ENCODE measurements at regions of chr5 and their contacts with region 1.

Region 1: DNA sequence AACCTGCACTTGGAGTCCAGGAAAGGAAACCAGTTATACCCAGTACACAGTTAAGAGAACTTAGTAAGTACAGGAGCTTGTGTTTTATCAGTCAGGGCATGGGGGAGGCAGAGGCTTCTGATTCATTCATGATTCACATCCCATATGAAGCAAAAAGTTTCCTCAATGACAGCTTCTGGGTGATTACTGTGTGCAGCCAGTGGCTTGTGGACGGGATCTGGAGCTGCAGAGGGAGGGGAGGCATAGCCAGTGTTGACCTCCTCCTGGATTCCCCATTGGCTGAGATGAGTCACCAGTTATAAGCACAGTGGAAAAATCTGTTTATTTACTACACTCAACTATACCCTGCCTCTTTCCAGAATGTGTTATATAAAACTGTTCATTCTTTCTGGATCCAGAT is 17.7 kb downstream of the IL31RA start:
- DNase-seq: no peak
- H3K4me3 Mint-ChIP-seq: no peak overlapping the region
- H3K27ac Mint-ChIP-seq: peak overlapping the region; percentile 78
- H3K4me1 Mint-ChIP-seq: peaks cover 14% of the 10 kb centered on the region
- H3K27me3 Mint-ChIP-seq: no peaks in the 10 kb centered on the region

Region 2: DNA sequence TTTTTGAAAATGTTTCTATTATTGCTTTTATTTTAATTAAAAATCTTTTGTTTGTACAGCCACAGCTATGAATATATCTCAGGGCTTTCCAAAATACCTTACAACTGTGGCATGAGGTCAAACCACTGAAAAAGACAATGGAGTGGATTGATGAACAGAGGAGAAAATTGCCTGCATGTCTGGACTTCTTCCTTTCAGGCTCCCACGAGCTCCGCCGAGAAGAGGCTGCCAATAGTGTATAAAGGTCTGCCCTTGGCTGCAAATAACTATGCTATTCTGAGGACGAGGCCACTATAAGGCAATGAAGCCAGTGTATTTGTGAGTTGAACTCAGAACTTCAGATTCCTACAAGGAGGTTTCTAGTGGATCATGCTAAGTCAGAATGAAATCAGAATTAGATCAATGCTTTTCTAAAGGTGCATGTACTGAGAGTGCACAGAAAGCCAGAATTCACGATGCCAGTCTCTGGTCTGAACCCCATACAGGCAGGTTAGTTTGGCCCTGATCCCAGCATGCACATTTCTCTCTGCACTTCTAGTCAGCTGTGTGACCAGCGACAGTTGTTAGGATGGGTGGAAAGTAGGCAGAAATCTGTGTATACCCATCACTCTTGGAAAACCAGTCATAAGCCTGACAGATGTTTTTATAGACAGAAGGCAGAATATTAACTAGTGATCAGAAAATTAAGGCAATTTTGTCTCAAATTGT is 291.3 kb before region 1 on chr5:
- intact Hi-C with region 1: loop called (anchors 5 kb)
- DNase-seq: no peak
- H3K4me3 Mint-ChIP-seq: no peak overlapping the region
- H3K27ac Mint-ChIP-seq: peak overlapping the region; percentile 21
- H3K4me1 Mint-ChIP-seq: peaks cover 33% of the 10 kb centered on the region
- H3K27me3 Mint-ChIP-seq: no peaks in the 10 kb centered on the region

Region 3: GRCh38 chr5:55711968-55712859 is 156.6 kb before region 1 on chr5 and contains the start of gene SLC38A9:
- intact Hi-C with region 1: loop called (anchors 1 kb)
- DNase-seq: peak; percentile 89
- H3K4me3 Mint-ChIP-seq: peak within 1 kb of the TSS; percentile 99
- H3K27ac Mint-ChIP-seq: peak within 1 kb of the TSS; percentile 91
- H3K4me1 Mint-ChIP-seq: peaks cover 39% of the 10 kb centered on the region
- H3K27me3 Mint-ChIP-seq: no peaks in the 10 kb centered on the region
- total RNA-seq, gene SLC38A9: 22.9 and 25.7 TPM in 2 replicates

Region 4: GRCh38 chr5:55747778-55748318 is 121.0 kb before region 1 on chr5:
- intact Hi-C with region 1: no loop called
- DNase-seq: no peak
- H3K4me3 Mint-ChIP-seq: no peak overlapping the region
- H3K27ac Mint-ChIP-seq: no peak overlapping the region
- H3K4me1 Mint-ChIP-seq: peaks cover 12% of the 10 kb centered on the region
- H3K27me3 Mint-ChIP-seq: peaks cover 2% of the 10 kb centered on the region

Region 5: GRCh38 chr5:55758231-55758630 is 110.6 kb before region 1 on chr5:
- intact Hi-C with region 1: loop called (anchors 2 kb)
- DNase-seq: no peak
- H3K4me3 Mint-ChIP-seq: peak overlapping the region; percentile 9
- H3K27ac Mint-ChIP-seq: no peak overlapping the region
- H3K4me1 Mint-ChIP-seq: peaks cover 25% of the 10 kb centered on the region
- H3K27me3 Mint-ChIP-seq: peaks cover 3% of the 10 kb centered on the region

Region 6: GRCh38 chr5:55829956-55830355 is 38.9 kb before region 1 on chr5:
- intact Hi-C with region 1: no loop called
- DNase-seq: no peak
- H3K4me3 Mint-ChIP-seq: no peak overlapping the region
- H3K27ac Mint-ChIP-seq: no peak overlapping the region
- H3K4me1 Mint-ChIP-seq: peaks cover 13% of the 10 kb centered on the region
- H3K27me3 Mint-ChIP-seq: peaks cover 5% of the 10 kb centered on the region

Region 7: GRCh38 chr5:55853818-55854217 is 15.0 kb before region 1 on chr5:
- intact Hi-C with region 1: loop called (anchors 1 kb)
- DNase-seq: no peak
- H3K4me3 Mint-ChIP-seq: peak overlapping the region; percentile 56
- H3K27ac Mint-ChIP-seq: no peak overlapping the region
- H3K4me1 Mint-ChIP-seq: peaks cover 71% of the 10 kb centered on the region
- H3K27me3 Mint-ChIP-seq: peaks cover 2% of the 10 kb centered on the region

Region 8: GRCh38 chr5:55903121-55903701 is 34.4 kb after region 1 on chr5:
- intact Hi-C with region 1: loop called (anchors 1 kb)
- DNase-seq: peak; percentile 79
- H3K4me3 Mint-ChIP-seq: peak overlapping the region; percentile 55
- H3K27ac Mint-ChIP-seq: peak overlapping the region; percentile 78
- H3K4me1 Mint-ChIP-seq: peaks cover 67% of the 10 kb centered on the region
- H3K27me3 Mint-ChIP-seq: peaks cover 2% of the 10 kb centered on the region

Region 9: GRCh38 chr5:56259002-56259511 is 390.2 kb after region 1 on chr5:
- intact Hi-C with region 1: loop called (anchors 2 kb)
- DNase-seq: no peak
- H3K4me3 Mint-ChIP-seq: no peak overlapping the region
- H3K27ac Mint-ChIP-seq: no peak overlapping the region
- H3K4me1 Mint-ChIP-seq: no peaks in the 10 kb centered on the region
- H3K27me3 Mint-ChIP-seq: peaks cover 14% of the 10 kb centered on the region

Measured in activated T-helper 1 cell treated with anti-CD3 and anti-CD28 coated beads, Interleukin-12 subunit alpha, Interleukin-12 subunit beta, Interleukin-2, Interleukin-4 antibody, amounts not matched to agents 30 ng/mL and 10 ng/mL and 1 ng/mL, durations not matched to agents 14 hours and 24 hours and 36 hours (primary cell).